Activated CD4-positive, alpha-beta T cell treated with anti-CD3 and anti-CD28 coated beads for 36 hours (primary cell): ENCODE measurements at regions of chr17 and their contacts with region 1.

Region 1: DNA sequence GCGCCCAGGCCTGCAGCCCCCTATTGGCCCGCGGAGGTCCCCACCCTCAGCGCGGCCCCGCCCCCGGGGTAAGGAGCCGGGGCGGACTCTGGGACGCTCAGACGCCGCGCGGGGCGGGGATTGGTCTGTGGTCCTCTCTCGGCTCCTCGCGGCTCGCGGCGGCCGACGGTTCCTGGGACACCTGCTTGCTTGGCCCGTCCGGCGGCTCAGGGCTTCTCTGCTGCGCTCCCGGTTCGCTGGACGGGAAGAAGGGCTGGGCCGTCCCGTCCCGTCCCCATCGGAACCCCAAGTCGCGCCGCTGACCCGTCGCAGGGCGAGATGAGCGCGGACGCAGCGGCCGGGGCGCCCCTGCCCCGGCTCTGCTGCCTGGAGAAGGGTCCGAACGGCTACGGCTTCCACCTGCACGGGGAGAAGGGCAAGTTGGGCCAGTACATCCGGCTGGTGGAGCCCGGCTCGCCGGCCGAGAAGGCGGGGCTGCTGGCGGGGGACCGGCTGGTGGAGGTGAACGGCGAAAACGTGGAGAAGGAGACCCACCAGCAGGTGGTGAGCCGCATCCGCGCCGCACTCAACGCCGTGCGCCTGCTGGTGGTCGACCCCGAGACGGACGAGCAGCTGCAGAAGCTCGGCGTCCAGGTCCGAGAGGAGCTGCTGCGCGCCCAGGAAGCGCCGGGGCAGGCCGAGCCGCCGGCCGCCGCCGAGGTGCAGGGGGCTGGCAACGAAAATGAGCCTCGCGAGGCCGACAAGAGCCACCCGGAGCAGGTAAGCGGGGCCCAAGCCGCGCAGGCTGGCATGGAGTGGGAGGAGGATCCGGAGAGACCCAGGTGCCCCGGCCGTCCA is at the start of gene NHERF1:
- DNase-seq: peak; percentile 97
- ATAC-seq: peak; percentile 90
- H3K4me3 Mint-ChIP-seq: peak within 1 kb of the TSS; percentile 98
- H3K27ac Mint-ChIP-seq: peak within 1 kb of the TSS; percentile 91
- H3K4me1 Mint-ChIP-seq: peaks cover 56% of the 10 kb centered on the region
- H3K27me3 Mint-ChIP-seq: no peaks in the 10 kb centered on the region
- total RNA-seq, gene NHERF1: 115 to 170 TPM

Region 2: GRCh38 chr17:74203439-74204240 is 545.1 kb before region 1 on chr17 and contains the start of gene RPL38:
- CTCF ChIA-PET with region 1: interaction called, 3 read pairs
- POLR2A ChIA-PET with region 1: no interaction called
- intact Hi-C with region 1: loop called in 1 of 2 experiments (anchors 1 kb)
- DNase-seq: peak; percentile 98
- ATAC-seq: peak; percentile 83
- H3K4me3 Mint-ChIP-seq: peak within 1 kb of the TSS; percentile 100
- H3K27ac Mint-ChIP-seq: peak within 1 kb of the TSS; percentile 100
- H3K4me1 Mint-ChIP-seq: peaks cover 44% of the 10 kb centered on the region
- H3K27me3 Mint-ChIP-seq: peaks cover 11% of the 10 kb centered on the region
- total RNA-seq, gene RPL38: 1,648 to 1,818 TPM

Region 3: GRCh38 chr17:74759243-74759801 is 10.6 kb after region 1 on chr17:
- CTCF ChIA-PET with region 1: interaction called, 82 read pairs
- POLR2A ChIA-PET with region 1: interaction called, 3 read pairs
- intact Hi-C with region 1: loop called (anchors 1 to 2 kb)
- DNase-seq: peak; percentile 71
- ATAC-seq: peak; percentile 78
- H3K4me3 Mint-ChIP-seq: peak overlapping the region; percentile 10
- H3K27ac Mint-ChIP-seq: peak overlapping the region; percentile 83
- H3K4me1 Mint-ChIP-seq: peaks cover 64% of the 10 kb centered on the region
- H3K27me3 Mint-ChIP-seq: no peaks in the 10 kb centered on the region

Region 4: DNA sequence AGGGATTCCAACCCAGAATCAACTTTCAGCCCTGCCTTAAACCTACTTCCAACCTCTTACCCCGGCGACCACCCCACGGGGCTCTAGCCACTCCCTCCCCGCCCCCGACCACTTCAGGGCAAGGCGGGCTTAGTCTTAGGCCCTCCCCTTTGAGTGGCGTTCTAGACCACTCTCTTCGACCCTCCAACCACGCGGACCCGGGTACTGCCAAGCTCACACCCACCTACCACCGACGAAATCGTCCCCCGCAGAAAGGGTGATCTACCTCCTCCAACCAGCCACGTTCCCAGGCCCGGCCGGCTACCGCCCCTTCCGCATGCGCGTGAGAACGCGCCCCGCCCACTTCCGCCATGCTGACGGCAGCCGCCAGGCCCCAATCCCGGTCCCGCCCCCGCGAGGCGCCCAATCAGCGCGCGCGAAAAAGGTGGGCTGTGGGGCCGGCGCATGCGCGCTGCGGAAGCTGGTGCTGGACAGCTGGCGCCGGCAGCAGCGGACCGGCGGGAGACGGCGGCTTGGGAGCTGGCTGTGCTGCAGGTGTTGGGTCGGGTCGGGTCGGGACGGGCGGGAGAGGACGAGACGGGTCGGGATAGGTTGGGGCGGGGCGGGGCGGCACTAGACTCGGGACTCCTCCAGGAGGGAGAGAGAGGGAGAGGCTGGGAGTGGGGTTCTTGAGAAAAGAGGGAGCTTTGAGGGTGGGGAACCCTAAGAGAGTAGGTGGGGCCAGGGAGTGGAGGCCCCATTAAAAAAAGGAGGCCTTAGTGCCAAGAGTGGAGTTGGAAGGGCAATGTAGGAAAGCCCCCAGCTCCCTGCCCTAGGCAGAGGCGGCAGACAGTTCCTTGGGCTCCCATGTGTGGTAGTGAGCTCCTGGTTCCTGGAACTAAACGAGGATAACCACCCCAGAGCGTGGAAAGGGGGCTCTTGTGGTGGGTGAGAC is 27.6 kb after region 1 on chr17 and contains the start of gene NAT9:
- CTCF ChIA-PET with region 1: interaction called, 93 read pairs
- POLR2A ChIA-PET with region 1: interaction called, 4 read pairs
- intact Hi-C with region 1: loop called (anchors 1 kb)
- DNase-seq: peak; percentile 100
- ATAC-seq: peak; percentile 76
- H3K4me3 Mint-ChIP-seq: peak within 1 kb of the TSS; percentile 98
- H3K27ac Mint-ChIP-seq: peak within 1 kb of the TSS; percentile 94
- H3K4me1 Mint-ChIP-seq: peaks cover 59% of the 10 kb centered on the region
- H3K27me3 Mint-ChIP-seq: no peaks in the 10 kb centered on the region
- total RNA-seq, gene NAT9: 23.7 to 39.6 TPM

Region 5: DNA sequence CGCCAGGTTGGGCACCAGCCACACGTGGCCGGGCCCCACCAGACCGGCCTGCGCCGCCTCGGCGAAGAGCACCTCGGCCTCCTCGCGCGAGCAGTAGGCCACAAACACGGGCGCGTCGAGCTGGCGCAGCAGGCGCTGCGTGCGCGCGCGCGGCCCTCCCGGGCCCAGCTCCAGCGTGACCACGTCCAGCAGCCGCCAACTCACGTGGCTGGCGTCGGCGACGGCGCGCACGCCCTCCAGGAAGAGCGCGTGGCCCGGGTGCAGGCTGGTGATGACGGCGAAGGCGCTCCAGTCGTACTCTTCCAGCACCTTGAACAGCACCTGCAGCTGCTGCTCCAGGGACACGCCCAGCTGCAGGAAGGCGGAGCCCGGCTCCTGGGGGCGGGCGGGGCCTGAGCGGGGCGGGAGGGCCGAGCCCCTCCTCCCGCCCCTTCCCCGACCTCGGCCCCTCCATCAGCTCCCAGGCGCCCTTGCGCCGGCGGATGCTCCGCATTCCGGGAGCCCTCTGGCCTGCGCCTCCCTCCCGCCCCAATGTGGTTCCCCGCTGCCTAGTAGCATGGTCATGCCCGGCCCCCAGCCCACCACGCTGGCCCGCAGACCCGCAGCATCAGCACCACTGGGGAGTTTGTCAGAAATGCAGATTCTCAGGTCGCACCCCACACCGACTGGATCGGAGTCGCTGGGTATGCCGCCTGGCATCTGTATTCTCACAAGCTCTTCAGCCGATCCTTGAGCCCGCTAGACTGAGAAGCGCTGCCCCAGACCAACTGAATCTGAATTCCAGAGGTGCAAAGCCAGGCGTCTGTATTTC is 103.7 kb after region 1 on chr17:
- CTCF ChIA-PET with region 1: interaction called, 3 read pairs
- POLR2A ChIA-PET with region 1: no interaction called
- intact Hi-C with region 1: loop called in 1 of 2 experiments (anchors 1 kb)
- DNase-seq: peak; percentile 83
- ATAC-seq: peak; percentile 91
- H3K4me3 Mint-ChIP-seq: peak overlapping the region; percentile 70
- H3K27ac Mint-ChIP-seq: peak overlapping the region; percentile 35
- H3K4me1 Mint-ChIP-seq: peaks cover 9% of the 10 kb centered on the region
- H3K27me3 Mint-ChIP-seq: peaks cover 27% of the 10 kb centered on the region

Region 6: GRCh38 chr17:75046582-75047289 is 298.0 kb after region 1 on chr17 and contains the starts of genes ATP5PD and KCTD2:
- CTCF ChIA-PET with region 1: no interaction called
- POLR2A ChIA-PET with region 1: no interaction called
- intact Hi-C with region 1: loop called in 1 of 2 experiments (anchors 1 kb)
- DNase-seq: peak; percentile 97
- ATAC-seq: peak; percentile 95
- H3K4me3 Mint-ChIP-seq: peak within 1 kb of the TSS; percentile 99
- H3K27ac Mint-ChIP-seq: peak within 1 kb of the TSS; percentile 94
- H3K4me1 Mint-ChIP-seq: peaks cover 37% of the 10 kb centered on the region
- H3K27me3 Mint-ChIP-seq: no peaks in the 10 kb centered on the region
- total RNA-seq, gene ATP5PD: 194 to 237 TPM
- total RNA-seq, gene KCTD2: 15.3 to 16.7 TPM